Posterior vena cava (tissue), 2 donors: ENCODE measurements at regions of chr2 and their contacts with region 1.

Region 1: DNA sequence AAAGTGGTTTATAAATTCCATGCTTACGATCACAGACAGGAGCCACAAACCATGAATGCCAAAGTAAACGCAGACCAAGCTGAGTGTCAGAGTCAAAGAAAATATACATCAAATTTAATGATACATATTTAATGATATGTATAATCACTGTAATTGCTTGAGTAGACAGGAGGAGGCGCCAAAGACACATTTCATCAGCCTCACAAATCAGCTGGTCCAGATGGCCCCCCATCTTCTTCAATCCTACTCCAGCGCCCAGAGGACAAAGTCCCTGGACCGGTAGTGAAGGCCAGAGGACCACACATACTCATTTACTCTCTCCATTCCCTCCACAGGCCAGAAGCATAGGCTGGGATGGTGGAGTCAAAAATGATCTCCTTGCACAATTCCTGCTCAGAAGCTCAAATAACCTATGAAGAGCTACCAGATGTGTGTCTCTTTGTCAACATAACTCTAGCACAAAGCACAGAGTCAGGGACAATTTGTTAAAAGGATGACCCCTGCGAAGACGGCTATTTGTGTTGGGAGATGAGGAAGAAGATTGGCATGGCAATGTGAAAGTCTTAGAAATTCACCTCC is 149.3 kb upstream of the PGAP1 start:
- DNase-seq: no peak

Region 2: GRCh38 chr2:197037863-197038398 is 37.9 kb before region 1 on chr2:
- intact Hi-C with region 1: loop called in 1 of 2 experiments (anchors 2 kb)
- DNase-seq: no peak